Activated CD4-positive, alpha-beta T cell treated with anti-CD3 and anti-CD28 coated beads for 36 hours (primary cell): ENCODE measurements at regions of chr6 and their contacts with region 1.

Region 1: GRCh38 chr6:22062807-22063408 is 233.9 kb downstream of the PRL start:
- DNase-seq: peak; percentile 82
- ATAC-seq: peak; percentile 83
- H3K4me3 Mint-ChIP-seq: peak overlapping the region; percentile 43
- H3K27ac Mint-ChIP-seq: peak overlapping the region; percentile 86
- H3K4me1 Mint-ChIP-seq: peaks cover 40% of the 10 kb centered on the region
- H3K27me3 Mint-ChIP-seq: peaks cover 12% of the 10 kb centered on the region

Region 2: GRCh38 chr6:20946022-20946421 is 1116.9 kb before region 1 on chr6:
- CTCF ChIA-PET with region 1: no interaction called
- POLR2A ChIA-PET with region 1: no interaction called
- intact Hi-C with region 1: no loop called
- DNase-seq: peak; percentile 6
- ATAC-seq: peak; percentile 58
- H3K4me3 Mint-ChIP-seq: no peak overlapping the region
- H3K27ac Mint-ChIP-seq: no peak overlapping the region
- H3K4me1 Mint-ChIP-seq: no peaks in the 10 kb centered on the region
- H3K27me3 Mint-ChIP-seq: no peaks in the 10 kb centered on the region

Region 3: GRCh38 chr6:21826023-21826422 is 236.9 kb before region 1 on chr6:
- CTCF ChIA-PET with region 1: no interaction called
- POLR2A ChIA-PET with region 1: no interaction called
- intact Hi-C with region 1: loop called in 1 of 2 experiments (anchors 5 kb)
- DNase-seq: no peak
- ATAC-seq: no peak
- H3K4me3 Mint-ChIP-seq: no peak overlapping the region
- H3K27ac Mint-ChIP-seq: no peak overlapping the region
- H3K4me1 Mint-ChIP-seq: peaks cover 14% of the 10 kb centered on the region
- H3K27me3 Mint-ChIP-seq: no peaks in the 10 kb centered on the region

Region 4: DNA sequence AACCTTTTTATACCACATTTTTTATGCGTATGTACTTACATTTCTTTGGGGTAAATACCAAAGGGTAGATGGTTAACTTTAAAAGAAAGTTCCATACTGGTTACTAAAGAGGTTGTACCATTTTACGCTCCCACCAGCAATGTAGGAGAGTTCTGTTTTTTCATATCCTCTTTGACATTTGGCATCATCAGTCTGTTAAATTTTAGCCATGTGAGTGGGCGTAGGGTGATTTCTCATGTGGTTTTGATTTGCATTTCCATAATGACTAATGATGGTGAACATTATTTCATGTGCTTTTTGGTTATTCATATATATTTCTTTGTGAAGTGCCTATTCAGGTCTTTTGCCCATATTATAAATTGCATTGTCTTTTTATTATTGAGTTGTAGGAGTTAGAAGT is 39.8 kb after region 1 on chr6:
- CTCF ChIA-PET with region 1: no interaction called
- POLR2A ChIA-PET with region 1: no interaction called
- intact Hi-C with region 1: loop called in 1 of 2 experiments (anchors 2 kb)
- DNase-seq: peak; percentile 40
- ATAC-seq: peak; percentile 53
- H3K4me3 Mint-ChIP-seq: no peak overlapping the region
- H3K27ac Mint-ChIP-seq: peak overlapping the region; percentile 1
- H3K4me1 Mint-ChIP-seq: peaks cover 14% of the 10 kb centered on the region
- H3K27me3 Mint-ChIP-seq: peaks cover 3% of the 10 kb centered on the region